ENCODE measurements at regions of chr17 and their contacts with region 1.

Region 1: DNA sequence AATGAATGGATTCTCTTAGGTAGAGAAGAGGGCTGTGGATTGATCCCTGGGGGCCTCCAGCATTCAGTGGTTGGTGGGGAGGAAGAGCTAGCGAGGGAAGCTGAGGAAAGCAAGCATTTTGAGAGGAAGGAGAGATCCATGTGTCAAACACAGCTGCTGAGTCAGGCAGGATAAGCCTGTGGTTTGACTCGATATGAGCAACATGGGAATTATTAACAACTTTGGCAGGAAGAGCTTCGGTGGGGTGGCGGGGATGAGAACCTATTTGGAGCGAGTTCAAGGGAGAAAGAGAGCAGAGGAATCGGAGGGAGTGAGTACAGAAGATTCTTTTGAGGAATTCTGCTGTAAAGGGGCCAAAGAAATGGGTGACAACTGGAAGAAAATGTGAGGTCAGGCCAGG is 59.5 kb upstream of the CDC42EP4 start:
- DNase-seq: no peak
- ATAC-seq: no peak
- H3K4me3 ChIP-seq: no peak overlapping the region
- H3K27ac ChIP-seq: no peak overlapping the region
- H3K4me1 ChIP-seq: no peaks in the 10 kb centered on the region; the same call in 1 of the 2 replicates
- H3K27me3 ChIP-seq: peaks cover 4% of the 10 kb centered on the region; the same call in 1 of the 2 replicates
- CTCF ChIP-seq: no peak

Region 2: DNA sequence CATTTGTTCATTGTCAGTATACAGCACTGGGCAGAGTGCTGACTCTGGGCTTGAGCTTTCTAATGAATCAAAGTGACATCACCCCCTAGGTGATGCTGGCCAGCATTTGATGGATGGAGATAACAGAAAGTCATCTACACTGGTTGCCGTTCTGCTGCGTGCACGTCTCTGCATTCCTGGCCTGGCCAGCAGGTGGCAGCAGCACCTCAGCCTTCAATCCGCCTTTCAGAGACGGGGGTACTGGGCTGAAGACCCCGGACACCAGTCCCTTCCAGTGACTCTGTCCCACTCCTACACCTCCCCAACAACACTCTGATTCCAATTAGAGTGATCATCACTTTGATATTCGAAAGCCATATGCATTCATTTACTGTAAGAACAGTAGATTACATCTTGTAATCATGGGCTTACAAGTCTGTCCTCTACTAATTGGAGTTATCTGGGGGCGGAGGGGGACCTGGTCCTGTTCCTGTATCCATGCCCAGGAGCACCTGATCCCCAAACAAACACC is 115.6 kb before region 1 on chr17:
- CTCF ChIA-PET with region 1: interaction called, 26 read pairs
- POLR2A ChIA-PET with region 1: interaction called, 12 read pairs
- in situ Hi-C with region 1: no loop called
- intact Hi-C with region 1: loop called (anchors 1 kb)
- DNase-seq: peak; percentile 56
- ATAC-seq: peak; percentile 82
- H3K4me3 ChIP-seq: no peak overlapping the region
- H3K27ac ChIP-seq: no peak overlapping the region
- H3K4me1 ChIP-seq: peaks cover 4% of the 10 kb centered on the region; the same call in 1 of the 2 replicates
- H3K27me3 ChIP-seq: no peaks in the 10 kb centered on the region
- CTCF ChIP-seq: peak; percentile 97

Region 3: DNA sequence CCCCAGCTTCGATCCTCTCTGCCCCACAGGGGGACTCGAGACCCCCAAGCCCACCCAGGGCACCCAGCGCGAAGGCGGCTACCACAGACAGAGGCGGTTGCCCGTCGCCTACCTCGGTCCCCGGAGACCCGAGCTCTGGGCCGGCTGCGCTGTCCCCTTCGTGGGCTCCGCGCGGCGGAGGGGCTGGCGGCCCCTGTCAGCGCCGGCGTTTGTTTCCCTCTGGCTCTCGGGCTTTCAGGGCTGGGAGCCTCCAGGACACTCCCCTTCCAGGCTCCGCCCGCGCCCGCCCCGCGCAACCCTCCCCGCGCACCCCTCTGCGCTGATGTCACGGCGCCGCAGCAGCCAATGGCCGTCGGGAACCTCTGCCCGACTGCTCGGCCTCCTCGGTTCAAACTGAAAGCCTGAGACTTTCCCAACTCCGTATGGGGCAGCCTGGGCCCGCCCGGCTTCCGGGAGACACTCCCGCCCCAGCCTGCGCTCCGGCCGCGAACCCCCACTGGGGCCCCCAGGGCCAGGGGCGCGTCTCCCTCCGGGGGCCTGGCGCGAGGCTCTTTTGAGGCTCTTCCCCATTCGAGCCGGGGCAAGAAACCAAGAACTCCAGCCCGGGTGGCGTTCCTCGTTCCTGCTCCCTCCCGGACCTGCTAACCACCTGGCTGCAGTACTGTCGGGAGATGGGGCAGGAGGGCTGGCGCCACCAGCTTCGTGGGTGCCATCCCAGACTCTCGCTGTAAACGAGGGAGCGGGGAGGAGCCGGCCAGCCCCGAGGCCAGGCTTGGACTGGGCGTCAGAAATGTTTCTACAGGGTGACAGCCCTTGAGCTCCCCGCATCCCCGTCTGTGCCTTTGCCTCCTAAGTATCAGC is 59.3 kb before region 1 on chr17 and contains the start of gene CDC42EP4:
- CTCF ChIA-PET with region 1: interaction called, 34 read pairs
- POLR2A ChIA-PET with region 1: interaction called, 4 read pairs
- in situ Hi-C with region 1: no loop called
- intact Hi-C with region 1: loop called (anchors 5 kb)
- DNase-seq: no peak
- ATAC-seq: peak; percentile 92
- H3K4me3 ChIP-seq: peak within 1 kb of the TSS; percentile 90
- H3K27ac ChIP-seq: peak within 1 kb of the TSS; percentile 87
- H3K4me1 ChIP-seq: peaks cover 25% of the 10 kb centered on the region
- H3K27me3 ChIP-seq: no peaks in the 10 kb centered on the region
- CTCF ChIP-seq: no peak
- total RNA-seq, gene CDC42EP4: 65.9 TPM

Region 4: DNA sequence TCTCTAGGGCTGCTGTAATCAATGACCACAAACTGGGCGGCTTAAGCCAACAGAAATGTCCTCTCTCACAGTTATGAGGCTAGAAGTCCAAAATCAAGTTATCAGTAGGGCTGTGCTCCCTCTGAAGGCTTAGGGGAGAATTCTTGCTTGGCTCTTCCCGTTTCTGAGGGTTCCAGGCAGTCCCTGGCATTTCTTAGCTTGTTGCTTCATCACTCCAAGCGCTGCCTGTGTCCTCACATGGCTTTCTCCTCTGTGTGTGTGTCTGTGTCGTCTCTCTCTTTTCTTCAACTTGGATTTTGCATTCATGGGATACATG is 45.8 kb before region 1 on chr17:
- CTCF ChIA-PET with region 1: no interaction called
- POLR2A ChIA-PET with region 1: no interaction called
- in situ Hi-C with region 1: no loop called
- intact Hi-C with region 1: no loop called
- DNase-seq: no peak
- ATAC-seq: 0 out of 2 replicates have a peak, but pooled peaks have one; percentile 40
- H3K4me3 ChIP-seq: no peak overlapping the region
- H3K27ac ChIP-seq: no peak overlapping the region
- H3K4me1 ChIP-seq: no peaks in the 10 kb centered on the region
- H3K27me3 ChIP-seq: no peaks in the 10 kb centered on the region
- CTCF ChIP-seq: no peak

Measured in Panc1 (cell line).